ENCODE measurements at regions of chr1 and their contacts with region 1.

Region 1: DNA sequence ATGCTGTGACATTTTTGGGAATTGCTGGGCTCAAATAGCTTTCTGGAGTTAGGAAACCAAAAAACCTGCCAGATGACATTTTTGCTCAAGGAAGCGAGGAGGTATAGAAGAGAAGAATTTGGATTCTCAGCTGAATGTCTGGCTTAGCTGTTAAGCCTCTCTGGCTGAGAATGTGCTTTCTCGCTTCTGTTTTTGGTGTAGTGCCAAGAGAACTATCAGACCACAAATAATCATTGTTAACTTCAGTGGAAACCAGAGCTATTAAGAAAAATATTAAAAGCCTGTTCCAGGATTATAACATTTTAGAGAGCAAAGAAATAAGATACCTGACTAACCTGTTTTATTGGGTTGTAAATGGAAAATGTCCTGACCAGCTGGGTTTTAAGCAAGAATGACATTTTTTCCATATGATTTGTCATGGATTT is 39.5 kb upstream of the DIPK1A start:
- DNase-seq: no peak
- H3K4me3 ChIP-seq: no peak overlapping the region
- H3K27ac ChIP-seq: no peak overlapping the region
- H3K4me1 ChIP-seq: peaks cover 31% of the 10 kb centered on the region
- CTCF ChIP-seq: no peak

Region 2: GRCh38 chr1:93015590-93015989 is 14.8 kb after region 1 on chr1:
- CTCF ChIA-PET with region 1: interaction called, 3 read pairs
- POLR2A ChIA-PET with region 1: interaction called, 62 read pairs
- intact Hi-C with region 1: no loop called
- DNase-seq: no peak
- H3K4me3 ChIP-seq: no peak overlapping the region
- H3K27ac ChIP-seq: no peak overlapping the region
- H3K4me1 ChIP-seq: peaks cover 38% of the 10 kb centered on the region
- CTCF ChIP-seq: no peak